Posterior cingulate gyrus (tissue), 11 donors: ENCODE measurements at regions of chr9 and their contacts with region 1.

Region 1: GRCh38 chr9:76810377-76810957 is 46.2 kb downstream of the PCA3 start:
- DNase-seq: peak in 5 of 10 donors; percentile 15 to 70 (median 48)

Region 2: GRCh38 chr9:76773036-76773435 is 37.4 kb before region 1 on chr9:
- intact Hi-C with region 1: no loop called
- DNase-seq: no peak

Region 3: GRCh38 chr9:76905791-76906650 is 95.6 kb after region 1 on chr9 and contains the start of gene PRUNE2:
- intact Hi-C with region 1: loop called (anchors 5 kb)
- DNase-seq: peak; percentile 49 to 96 (median 62)

Region 4: GRCh38 chr9:77224746-77225312 is 414.4 kb after region 1 on chr9:
- intact Hi-C with region 1: no loop called
- DNase-seq: no peak